Activated CD8-positive, alpha-beta memory T cell treated with anti-CD3 and anti-CD28 coated beads, Interleukin-2, amount 10 ng/mL, durations not matched to agents 7 days and 5 days (primary cell): ENCODE measurements at regions of chr14 and their contacts with region 1.

Region 1: GRCh38 chr14:91418387-91419043 is 895 bp upstream of the CCDC88C start:
- DNase-seq: peak; percentile 88
- ATAC-seq: peak; percentile 23
- H3K4me3 Mint-ChIP-seq: peak overlapping the region; percentile 68
- H3K27ac Mint-ChIP-seq: peak overlapping the region; percentile 75
- H3K4me1 Mint-ChIP-seq: peaks cover 28% of the 10 kb centered on the region
- H3K27me3 Mint-ChIP-seq: peaks cover 5% of the 10 kb centered on the region

Region 2: DNA sequence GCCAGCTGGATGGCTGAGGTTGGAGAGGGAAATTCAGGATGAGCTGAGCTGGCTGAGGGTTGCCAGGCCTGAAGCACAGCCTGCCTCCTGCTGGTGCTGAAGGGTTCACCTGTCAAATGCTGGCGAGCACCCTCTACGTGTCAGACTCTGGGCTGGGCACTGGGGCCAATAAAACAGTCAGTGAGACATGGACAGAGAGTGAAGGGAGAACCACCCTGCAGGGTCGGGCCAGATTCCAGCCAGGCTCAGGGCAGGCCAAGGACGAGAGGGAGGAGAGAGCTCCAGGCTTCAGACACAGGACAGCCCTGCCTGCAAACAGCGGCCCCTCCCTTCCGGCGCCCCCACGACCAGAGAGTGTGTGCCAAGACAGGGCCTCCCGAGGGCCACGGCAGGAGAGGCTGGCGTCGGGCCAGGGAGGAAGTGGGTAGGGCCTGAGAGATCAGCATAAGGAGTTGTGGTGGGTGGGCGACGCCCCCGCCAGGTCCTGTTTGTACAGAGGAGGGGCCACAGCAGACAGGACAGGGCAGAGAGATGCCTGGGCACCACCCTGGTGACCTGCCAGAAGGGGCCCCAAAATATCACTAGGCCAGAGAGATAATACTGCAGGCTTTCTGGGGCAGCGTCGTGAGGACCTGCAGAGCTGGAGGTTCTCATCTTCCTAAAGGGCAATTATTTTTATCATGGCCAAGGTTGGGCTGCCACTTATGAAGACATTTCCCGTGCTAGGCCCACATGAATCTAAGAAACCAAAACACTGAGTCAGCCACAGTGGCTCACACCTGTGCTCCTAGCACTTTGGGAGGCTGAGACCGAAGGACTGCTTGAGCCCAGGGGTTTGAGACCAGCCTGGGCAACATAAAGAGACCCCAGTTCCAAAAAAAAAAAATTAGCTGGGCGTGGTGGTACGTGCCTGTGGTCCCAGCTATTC is 100.9 kb before region 1 on chr14:
- CTCF ChIA-PET with region 1: interaction called, 175 read pairs
- DNase-seq: peak; percentile 91
- ATAC-seq: peak; percentile 60
- H3K4me3 Mint-ChIP-seq: peak overlapping the region; percentile 51
- H3K27ac Mint-ChIP-seq: peak overlapping the region; percentile 96
- H3K4me1 Mint-ChIP-seq: peaks cover 78% of the 10 kb centered on the region
- H3K27me3 Mint-ChIP-seq: no peaks in the 10 kb centered on the region

Region 3: GRCh38 chr14:91373591-91374254 is 44.8 kb before region 1 on chr14:
- CTCF ChIA-PET with region 1: interaction called, 10 read pairs
- DNase-seq: peak; percentile 81
- ATAC-seq: peak; percentile 57
- H3K4me3 Mint-ChIP-seq: peak overlapping the region; percentile 70
- H3K27ac Mint-ChIP-seq: peak overlapping the region; percentile 96
- H3K4me1 Mint-ChIP-seq: peaks cover 100% of the 10 kb centered on the region
- H3K27me3 Mint-ChIP-seq: no peaks in the 10 kb centered on the region

Region 4: GRCh38 chr14:91470216-91470615 is 51.7 kb after region 1 on chr14:
- CTCF ChIA-PET with region 1: no interaction called
- DNase-seq: no peak
- ATAC-seq: no peak
- H3K4me3 Mint-ChIP-seq: no peak overlapping the region
- H3K27ac Mint-ChIP-seq: no peak overlapping the region
- H3K4me1 Mint-ChIP-seq: peaks cover 16% of the 10 kb centered on the region
- H3K27me3 Mint-ChIP-seq: no peaks in the 10 kb centered on the region